Posterior vena cava (tissue), 2 donors: ENCODE measurements at regions of chr12 and their contacts with region 1.

Region 1: DNA sequence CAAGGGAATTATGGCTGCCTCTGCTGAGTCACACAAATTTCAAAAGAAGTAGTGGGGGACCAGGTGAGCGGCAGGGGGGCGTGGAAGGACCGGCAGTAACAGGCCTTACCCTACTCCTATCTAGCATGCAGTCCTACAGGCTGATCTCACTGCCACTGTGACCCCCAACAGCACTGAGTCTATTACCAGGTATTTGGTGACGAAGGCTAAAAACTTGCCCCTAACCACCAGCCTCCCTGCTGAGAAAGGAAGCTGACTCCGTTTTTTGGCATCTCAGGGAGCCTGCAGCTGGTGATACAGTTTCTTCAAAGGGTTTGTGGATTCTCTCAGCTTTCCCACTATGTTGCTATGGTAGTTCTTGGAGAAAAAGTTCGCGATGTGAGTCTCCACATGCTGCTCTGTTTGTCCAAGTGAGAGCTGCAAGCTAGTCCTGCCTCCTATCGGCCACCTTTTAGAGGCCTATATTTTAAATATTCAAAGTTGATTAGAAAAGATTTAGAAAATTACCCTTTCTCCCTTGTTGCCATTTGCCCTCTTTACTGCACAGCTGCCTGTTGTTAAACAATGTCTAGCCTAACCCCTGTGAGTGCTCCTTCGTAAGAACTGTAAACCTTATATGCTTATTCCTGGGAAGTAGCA is 57.1 kb upstream of the SLCO1B1 start:
- DNase-seq: no peak

Region 2: DNA sequence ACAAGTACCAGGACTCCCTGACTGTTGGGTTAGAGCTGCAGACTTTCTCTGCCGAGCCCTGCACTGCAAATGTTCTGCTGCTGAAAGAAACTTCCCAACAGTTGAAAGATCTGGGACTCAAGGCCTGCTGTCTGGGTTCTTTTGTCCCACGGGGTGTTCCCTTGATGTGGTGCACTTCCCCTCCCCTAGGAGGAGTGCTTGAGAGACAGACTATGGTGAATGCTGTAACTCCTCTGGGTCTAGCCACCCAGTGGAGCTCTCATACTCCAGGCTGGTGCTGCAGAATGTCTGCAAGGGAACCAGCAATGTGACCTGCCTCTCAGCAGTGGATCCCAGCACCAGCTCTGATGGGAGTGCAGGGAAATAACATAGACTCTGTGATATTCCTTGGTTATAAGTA is 72.2 kb before region 1 on chr12:
- intact Hi-C with region 1: no loop called
- DNase-seq: no peak

Region 3: DNA sequence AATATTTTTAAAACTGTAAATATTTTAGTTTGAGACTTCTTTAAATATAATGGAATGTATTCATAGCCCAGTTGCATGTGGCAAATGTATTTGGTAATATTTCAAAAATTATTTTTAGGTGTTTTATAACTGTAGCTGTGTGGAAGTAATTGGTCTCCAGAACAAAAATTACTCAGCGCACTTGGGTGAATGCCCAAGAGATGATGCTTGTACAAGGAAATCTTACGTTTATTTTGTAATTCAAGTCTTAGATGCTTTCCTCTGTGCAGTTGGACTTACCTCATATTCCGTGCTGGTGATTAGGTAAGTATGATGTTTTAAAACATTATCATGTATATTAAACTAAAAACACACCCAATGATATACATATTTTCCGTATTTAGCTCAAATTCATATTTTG is 19.6 kb before region 1 on chr12:
- intact Hi-C with region 1: loop called in 1 of 2 experiments (anchors 1 kb)
- DNase-seq: no peak

Region 4: DNA sequence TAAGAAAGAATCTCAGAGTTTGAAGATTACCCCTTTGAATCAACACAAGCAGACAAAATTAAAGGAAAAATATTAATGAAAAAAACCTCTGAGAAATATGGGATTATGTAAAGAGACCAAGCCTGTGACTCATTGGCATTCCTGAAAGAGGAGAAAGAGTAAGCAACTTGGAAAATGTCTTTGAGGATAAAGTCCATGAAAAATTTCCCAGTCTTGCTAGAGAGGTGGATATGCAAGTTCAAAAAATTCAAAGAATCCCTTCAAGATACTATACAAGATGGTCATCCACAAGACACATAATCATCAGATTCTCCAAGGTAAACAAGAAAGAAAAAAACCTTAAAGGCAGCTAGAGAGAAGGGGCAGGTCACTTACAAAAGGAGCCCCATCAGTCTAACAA is 70.4 kb after region 1 on chr12:
- intact Hi-C with region 1: no loop called
- DNase-seq: no peak

Region 5: DNA sequence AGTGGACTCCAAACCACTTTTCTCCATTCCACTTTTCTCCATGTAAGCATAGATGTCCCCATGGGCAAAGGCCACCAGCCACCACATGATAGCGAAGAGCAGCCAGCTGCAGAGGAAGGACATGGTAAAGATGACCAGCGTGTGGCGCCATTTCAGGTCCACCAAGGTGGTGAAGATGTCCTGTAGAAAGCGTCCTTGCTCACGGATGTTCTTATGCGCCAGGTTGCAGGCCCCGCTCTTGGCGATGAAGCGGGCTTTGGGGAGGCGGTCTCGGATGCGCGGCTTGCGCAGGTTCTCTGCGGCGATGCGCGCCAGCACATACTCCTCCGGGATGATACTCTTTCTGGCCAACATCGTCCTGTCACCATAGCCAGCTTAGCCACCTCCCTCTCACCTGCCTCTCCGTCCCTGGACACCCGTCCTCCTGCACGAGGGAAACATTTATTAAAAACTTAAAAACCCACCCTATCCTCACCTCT is 699.4 kb after region 1 on chr12:
- intact Hi-C with region 1: no loop called
- DNase-seq: peak; percentile 86